ENCODE measurements at regions of chr4 and their contacts with region 1.

Region 1: DNA sequence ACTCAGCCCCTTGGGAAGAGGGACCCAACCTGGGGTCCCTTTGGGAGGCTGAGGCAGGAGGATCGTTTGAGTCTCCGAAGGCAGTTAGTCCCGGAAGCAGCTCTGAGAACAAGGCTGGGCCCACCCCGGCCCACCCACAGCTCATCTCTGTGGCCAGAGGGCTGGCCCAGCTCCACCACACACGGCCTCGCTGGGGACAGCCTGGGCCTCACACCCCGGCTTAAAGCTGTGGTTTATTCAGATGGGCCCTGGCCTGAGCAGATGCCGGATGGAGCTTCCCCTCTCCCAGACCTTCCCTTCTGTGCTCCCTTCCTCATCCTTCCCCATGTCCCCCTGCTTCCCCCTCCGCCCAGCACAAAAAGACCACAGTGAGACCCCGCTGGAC is 54.4 kb downstream of the FAM53A start:
- DNase-seq: no peak
- H3K4me3 ChIP-seq: no peak overlapping the region
- H3K27ac ChIP-seq: no peak overlapping the region
- H3K4me1 ChIP-seq: peaks cover 0 to 6% (median 0%) of the 10 kb centered on the region in 4 donors
- H3K27me3 ChIP-seq: no peaks in the 10 kb centered on the region
- CTCF ChIP-seq: no peak
- EP300 ChIP-seq: no peak
- POLR2A ChIP-seq: no peak

Region 2: DNA sequence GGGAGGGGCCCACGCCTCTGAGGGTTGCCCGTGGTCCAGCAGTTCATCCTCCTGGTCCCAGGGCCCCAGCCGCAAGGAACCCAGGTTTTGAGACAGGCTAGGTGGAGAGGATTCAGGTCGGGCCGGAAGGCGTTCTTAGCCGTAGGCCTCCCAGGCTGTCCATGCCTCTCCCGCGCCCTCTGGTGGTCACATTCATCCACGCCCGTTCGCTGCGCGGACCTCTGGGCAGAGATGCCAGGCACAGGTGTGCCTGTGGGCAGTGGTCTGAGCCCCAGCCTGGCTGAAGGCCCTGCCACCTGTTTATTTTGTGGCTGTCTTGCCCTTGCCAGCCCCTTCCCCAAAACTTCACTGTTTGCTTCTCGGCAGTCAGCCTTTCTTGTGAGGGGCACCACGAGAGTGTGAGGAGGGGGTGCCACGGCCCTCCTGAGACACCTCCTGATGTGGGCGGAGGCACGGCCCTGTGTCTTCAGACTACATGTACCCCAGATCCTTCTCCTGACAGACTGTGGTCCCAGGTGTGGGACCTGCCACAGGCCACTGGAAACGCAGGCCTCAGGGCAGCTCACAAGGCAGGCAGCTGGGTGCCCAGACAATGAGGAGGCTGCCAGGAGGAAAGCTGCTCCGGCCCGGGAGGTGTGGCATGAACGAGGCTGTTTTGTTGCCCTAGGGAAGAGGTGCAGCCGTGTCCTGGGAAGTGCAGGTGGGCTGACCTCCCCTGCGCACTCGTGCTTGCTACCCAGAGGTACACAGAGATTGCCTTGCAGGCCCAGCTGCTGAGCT is 277.6 kb before region 1 on chr4:
- intact Hi-C with region 1: loop called (anchors 10 kb)
- DNase-seq: peak; percentile 93 to 94
- H3K4me3 ChIP-seq: no peak overlapping the region
- H3K27ac ChIP-seq: peak overlapping the region in 2 of 5 donors; percentile 52 to 60
- H3K4me1 ChIP-seq: peaks cover 15 to 46% (median 36%) of the 10 kb centered on the region in 4 donors
- H3K27me3 ChIP-seq: no peaks in the 10 kb centered on the region
- CTCF ChIP-seq: peak in 5 of 7 experiments; percentile 75 to 93 (median 87)
- EP300 ChIP-seq: no peak
- POLR2A ChIP-seq: no peak

Region 3: DNA sequence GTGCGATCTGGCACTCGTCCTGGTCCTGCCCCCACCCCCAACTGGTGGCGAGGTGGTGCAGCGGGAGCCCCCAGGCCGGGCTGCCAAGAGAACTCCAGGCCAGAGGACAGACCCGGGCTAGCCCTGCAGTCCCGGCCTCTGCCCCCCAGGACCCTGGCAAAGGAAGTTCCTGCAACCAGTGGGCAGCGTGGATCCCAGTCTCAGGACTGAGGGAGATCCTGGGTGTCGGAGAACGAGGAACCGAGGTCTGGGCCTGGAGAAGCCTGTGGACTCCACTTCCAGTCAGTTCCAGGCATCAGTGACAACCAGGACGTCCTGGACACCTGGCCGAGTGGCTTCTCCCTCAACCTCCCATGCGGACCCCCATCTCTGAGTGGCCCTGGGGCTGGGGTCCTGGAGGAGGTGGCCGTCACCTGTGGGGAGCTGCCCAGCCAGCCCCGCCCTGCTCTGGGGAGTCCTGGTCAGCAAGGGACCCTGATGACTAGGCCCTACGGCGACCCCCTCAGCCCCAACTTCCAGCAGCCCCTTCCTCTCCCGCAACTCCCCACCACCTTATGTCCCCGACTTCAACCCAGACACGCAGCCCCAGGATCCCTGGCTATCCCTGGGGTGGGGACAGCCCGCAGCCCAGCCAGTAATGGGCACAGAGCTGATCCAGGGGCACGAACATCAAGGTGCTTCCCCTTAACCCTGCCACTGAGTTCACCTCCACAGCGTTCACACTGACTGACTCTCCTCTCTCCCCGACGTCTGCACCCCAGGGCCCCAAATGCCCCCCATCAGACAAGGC is 169.8 kb before region 1 on chr4:
- intact Hi-C with region 1: no loop called
- DNase-seq: peak in 1 of 2 donors; percentile 20
- H3K4me3 ChIP-seq: no peak overlapping the region
- H3K27ac ChIP-seq: no peak overlapping the region
- H3K4me1 ChIP-seq: no peaks in the 10 kb centered on the region
- H3K27me3 ChIP-seq: peaks cover 5 to 69% (median 44%) of the 10 kb centered on the region in 3 donors
- CTCF ChIP-seq: no peak
- EP300 ChIP-seq: no peak
- POLR2A ChIP-seq: no peak

Region 4: GRCh38 chr4:1813915-1814314 is 184.2 kb after region 1 on chr4:
- intact Hi-C with region 1: no loop called
- DNase-seq: no peak
- H3K4me3 ChIP-seq: no peak overlapping the region
- H3K27ac ChIP-seq: no peak overlapping the region
- H3K4me1 ChIP-seq: peaks cover 0 to 3% (median 0%) of the 10 kb centered on the region in 4 donors
- H3K27me3 ChIP-seq: no peaks in the 10 kb centered on the region
- CTCF ChIP-seq: no peak
- EP300 ChIP-seq: no peak
- POLR2A ChIP-seq: no peak

Region 5: GRCh38 chr4:2059034-2059725 is 429.5 kb after region 1 on chr4 and contains the start of gene NAT8L:
- intact Hi-C with region 1: no loop called
- DNase-seq: peak in 1 of 2 donors; percentile 77
- H3K4me3 ChIP-seq: peak within 1 kb of the TSS; percentile 44 to 52 (median 48)
- H3K27ac ChIP-seq: no peak within 1 kb of the TSS
- H3K4me1 ChIP-seq: peaks cover 20 to 25% (median 23%) of the 10 kb centered on the region in 4 donors
- H3K27me3 ChIP-seq: peaks cover 18 to 85% (median 44%) of the 10 kb centered on the region in 3 donors
- CTCF ChIP-seq: no peak
- EP300 ChIP-seq: no peak
- POLR2A ChIP-seq: no peak
- total RNA-seq, gene NAT8L: 0.73 TPM in 1 of 5 donors, not detected in the others

Measured in stomach (tissue), 19 donors.